ENCODE measurements at regions of chr6 and their contacts with region 1.

Region 1: GRCh38 chr6:140494321-140495075 is 1120.0 kb upstream of the CITED2 start:
- DNase-seq: no peak
- ATAC-seq: no peak
- H3K4me3 ChIP-seq: no peak overlapping the region
- H3K4me1 ChIP-seq: no peaks in the 10 kb centered on the region
- CTCF ChIP-seq: no peak

Region 2: GRCh38 chr6:140478631-140479030 is 15.9 kb before region 1 on chr6:
- intact Hi-C with region 1: loop called in 1 of 2 experiments (anchors 2 kb)
- DNase-seq: no peak
- ATAC-seq: no peak
- H3K4me3 ChIP-seq: no peak overlapping the region
- H3K4me1 ChIP-seq: no peaks in the 10 kb centered on the region
- CTCF ChIP-seq: no peak

Region 3: DNA sequence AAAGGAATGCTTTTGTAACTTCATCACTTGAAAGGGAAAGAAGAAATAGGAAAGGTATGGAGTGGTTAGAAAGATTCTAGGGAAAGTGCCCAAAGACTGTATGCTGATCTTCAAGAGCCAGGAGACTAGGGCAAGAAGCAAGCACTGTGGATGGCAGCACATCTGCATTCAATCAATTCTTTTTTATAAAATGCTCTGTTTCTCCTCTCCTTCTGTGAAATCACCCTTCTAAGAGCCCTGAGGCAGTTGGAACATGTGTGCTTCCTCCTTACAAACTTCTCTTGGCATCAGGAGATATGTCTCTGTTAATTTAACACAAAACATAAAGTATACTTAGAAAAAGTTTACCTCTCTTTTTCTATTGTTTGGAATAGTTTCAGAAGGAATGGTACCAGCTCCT is 476.0 kb after region 1 on chr6:
- intact Hi-C with region 1: no loop called
- DNase-seq: no peak
- ATAC-seq: no peak
- H3K4me3 ChIP-seq: no peak overlapping the region
- H3K4me1 ChIP-seq: no peaks in the 10 kb centered on the region
- CTCF ChIP-seq: no peak

Measured in mucosa of descending colon (tissue), 3 donors.